Right lobe of liver (tissue), 6 donors: ENCODE measurements at regions of chr2 and their contacts with region 1.

Region 1: DNA sequence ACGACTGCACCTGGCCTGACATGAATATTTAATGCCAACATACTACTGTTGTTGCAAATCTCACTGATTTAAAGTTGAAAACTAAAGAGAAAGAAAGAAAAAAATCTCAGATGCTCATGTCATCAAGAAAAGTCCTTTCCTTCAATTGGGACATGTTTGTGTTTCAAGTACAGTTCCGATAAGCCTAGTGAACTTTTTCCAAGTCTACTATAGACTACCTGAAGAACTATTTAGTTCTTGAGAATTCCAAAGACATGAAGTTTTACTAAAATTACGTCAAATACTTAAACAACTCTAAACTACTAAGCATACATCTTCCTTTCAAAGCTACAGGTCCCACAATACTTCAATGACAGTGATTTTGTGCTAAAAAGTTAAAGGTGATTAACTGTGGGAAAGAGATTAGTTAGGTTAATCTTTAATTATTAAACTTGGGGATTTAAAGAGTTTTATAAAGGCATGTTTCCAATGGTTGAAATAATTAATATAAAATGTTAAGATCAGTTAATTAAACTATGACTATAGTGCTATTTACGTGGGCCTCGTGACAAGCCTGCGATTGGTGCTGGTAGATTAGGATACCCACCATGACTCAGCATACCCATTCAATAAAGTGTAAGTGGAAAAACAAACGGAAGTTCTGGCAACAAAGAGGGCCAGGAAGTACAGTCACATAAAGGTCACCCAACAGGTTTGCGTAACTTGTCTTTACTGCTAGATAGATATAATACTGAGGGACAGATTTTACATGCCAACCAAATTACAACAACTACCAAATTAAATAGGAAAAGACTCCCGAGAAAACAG is 55.5 kb downstream of the SEPTIN10 start:
- DNase-seq: peak in 2 of 3 donors; percentile 39 to 60
- ATAC-seq: peak; percentile 86 to 95 (median 90)
- H3K4me3 ChIP-seq: no peak overlapping the region
- H3K27ac ChIP-seq: peak overlapping the region; percentile 46 to 80 (median 65)
- H3K4me1 ChIP-seq: peaks cover 0 to 21% (median 0%) of the 10 kb centered on the region in 4 donors
- H3K27me3 ChIP-seq: no peaks in the 10 kb centered on the region
- CTCF ChIP-seq: no peak
- POLR2A ChIP-seq: no peak

Region 2: DNA sequence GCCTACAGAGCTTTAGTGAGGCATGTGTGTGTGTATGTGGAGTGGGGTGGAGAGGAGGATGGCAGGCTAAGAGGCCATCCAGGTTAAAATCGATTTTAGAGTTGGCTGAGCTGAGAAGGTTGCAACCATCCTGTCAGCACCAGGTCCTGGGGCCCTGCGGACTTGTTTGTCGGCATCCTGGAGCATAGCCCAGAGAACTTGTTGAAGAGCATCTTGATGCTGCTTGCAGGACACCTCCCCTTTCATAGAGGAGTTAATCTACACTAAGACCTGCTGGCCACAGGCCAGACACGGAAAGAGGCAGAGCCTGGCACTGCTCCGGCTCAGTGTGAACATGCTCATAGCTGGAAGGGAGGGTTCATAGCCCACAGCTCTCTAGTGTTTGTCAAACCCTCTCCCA is 163.7 kb after region 1 on chr2:
- intact Hi-C with region 1: loop called in 1 of 2 experiments (anchors 10 kb)
- DNase-seq: peak in 2 of 3 donors; percentile 41 to 72
- ATAC-seq: peak; percentile 80 to 90 (median 84)
- H3K4me3 ChIP-seq: no peak overlapping the region
- H3K27ac ChIP-seq: no peak overlapping the region
- H3K4me1 ChIP-seq: peaks cover 0 to 4% (median 0%) of the 10 kb centered on the region in 4 donors
- H3K27me3 ChIP-seq: no peaks in the 10 kb centered on the region
- CTCF ChIP-seq: no peak
- POLR2A ChIP-seq: no peak